OCI-LY7 (cell line): ENCODE measurements at regions of chr10 and their contacts with region 1.

Region 1: DNA sequence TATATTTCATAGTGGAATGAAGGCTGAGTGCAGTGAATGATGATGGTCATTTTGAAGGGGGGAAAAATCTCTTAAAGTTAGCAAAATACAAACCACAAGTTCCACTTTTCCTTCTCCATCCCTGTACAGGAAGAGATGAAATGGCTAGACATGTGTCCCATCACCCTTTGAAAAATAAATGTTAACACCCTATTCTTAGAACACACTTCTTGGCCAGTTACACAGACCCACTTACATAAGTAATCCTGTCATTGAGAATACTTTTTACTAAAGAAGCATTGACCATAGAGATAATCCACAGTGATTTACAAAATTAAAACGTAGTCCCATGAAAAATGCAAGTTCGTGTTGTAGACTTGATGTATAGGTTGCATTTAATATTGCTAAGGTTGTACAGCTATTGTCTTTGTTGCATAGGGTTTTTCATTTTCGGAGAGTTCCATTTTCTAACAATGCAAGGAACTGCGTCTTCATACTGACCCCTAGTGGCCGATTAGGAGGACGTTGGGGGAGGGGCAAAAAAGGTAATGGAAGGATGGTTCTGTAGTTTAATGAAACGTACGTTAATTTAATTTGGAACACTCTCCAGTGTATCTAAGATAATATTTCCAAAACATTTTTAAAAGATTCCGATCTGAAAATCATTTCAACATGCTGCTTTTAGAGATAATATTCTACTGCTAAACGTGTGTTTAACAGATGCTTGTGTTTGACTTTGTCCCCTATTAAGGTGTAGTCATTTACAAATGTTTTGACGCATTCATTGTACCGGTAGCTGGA is 60.9 kb downstream of the ARMC3 start:
- DNase-seq: peak; percentile 74
- H3K4me3 ChIP-seq: no peak overlapping the region
- H3K27ac ChIP-seq: no peak overlapping the region
- H3K4me1 ChIP-seq: no peaks in the 10 kb centered on the region
- CTCF ChIP-seq: peak; percentile 98

Region 2: GRCh38 chr10:21989453-21990154 is 999.2 kb before region 1 on chr10:
- CTCF ChIA-PET with region 1: no interaction called
- POLR2A ChIA-PET with region 1: interaction called, 5 read pairs
- intact Hi-C with region 1: loop called (anchors 2 kb)
- DNase-seq: peak; percentile 60
- H3K4me3 ChIP-seq: no peak overlapping the region
- H3K27ac ChIP-seq: no peak overlapping the region
- H3K4me1 ChIP-seq: no peaks in the 10 kb centered on the region
- CTCF ChIP-seq: peak; percentile 76

Region 3: GRCh38 chr10:22436884-22437619 is 551.7 kb before region 1 on chr10:
- CTCF ChIA-PET with region 1: no interaction called
- POLR2A ChIA-PET with region 1: no interaction called
- intact Hi-C with region 1: loop called (anchors 5 kb)
- DNase-seq: peak; percentile 32
- H3K4me3 ChIP-seq: peak overlapping the region; percentile 66
- H3K27ac ChIP-seq: no peak overlapping the region
- H3K4me1 ChIP-seq: no peaks in the 10 kb centered on the region
- CTCF ChIP-seq: no peak

Region 4: GRCh38 chr10:22573820-22574569 is 414.8 kb before region 1 on chr10:
- CTCF ChIA-PET with region 1: no interaction called
- POLR2A ChIA-PET with region 1: no interaction called
- intact Hi-C with region 1: loop called (anchors 1 kb)
- DNase-seq: peak; percentile 30
- H3K4me3 ChIP-seq: no peak overlapping the region
- H3K27ac ChIP-seq: no peak overlapping the region
- H3K4me1 ChIP-seq: no peaks in the 10 kb centered on the region
- CTCF ChIP-seq: peak; percentile 83